RWPE1 (cell line): ENCODE measurements at regions of chr11 and their contacts with region 1.

Region 1: GRCh38 chr11:128890543-128891368 is at the start of gene KCNJ5:
- DNase-seq: peak; percentile 34
- H3K27ac ChIP-seq: peak within 1 kb of the TSS; percentile 42
- CTCF ChIP-seq: no peak

Region 2: DNA sequence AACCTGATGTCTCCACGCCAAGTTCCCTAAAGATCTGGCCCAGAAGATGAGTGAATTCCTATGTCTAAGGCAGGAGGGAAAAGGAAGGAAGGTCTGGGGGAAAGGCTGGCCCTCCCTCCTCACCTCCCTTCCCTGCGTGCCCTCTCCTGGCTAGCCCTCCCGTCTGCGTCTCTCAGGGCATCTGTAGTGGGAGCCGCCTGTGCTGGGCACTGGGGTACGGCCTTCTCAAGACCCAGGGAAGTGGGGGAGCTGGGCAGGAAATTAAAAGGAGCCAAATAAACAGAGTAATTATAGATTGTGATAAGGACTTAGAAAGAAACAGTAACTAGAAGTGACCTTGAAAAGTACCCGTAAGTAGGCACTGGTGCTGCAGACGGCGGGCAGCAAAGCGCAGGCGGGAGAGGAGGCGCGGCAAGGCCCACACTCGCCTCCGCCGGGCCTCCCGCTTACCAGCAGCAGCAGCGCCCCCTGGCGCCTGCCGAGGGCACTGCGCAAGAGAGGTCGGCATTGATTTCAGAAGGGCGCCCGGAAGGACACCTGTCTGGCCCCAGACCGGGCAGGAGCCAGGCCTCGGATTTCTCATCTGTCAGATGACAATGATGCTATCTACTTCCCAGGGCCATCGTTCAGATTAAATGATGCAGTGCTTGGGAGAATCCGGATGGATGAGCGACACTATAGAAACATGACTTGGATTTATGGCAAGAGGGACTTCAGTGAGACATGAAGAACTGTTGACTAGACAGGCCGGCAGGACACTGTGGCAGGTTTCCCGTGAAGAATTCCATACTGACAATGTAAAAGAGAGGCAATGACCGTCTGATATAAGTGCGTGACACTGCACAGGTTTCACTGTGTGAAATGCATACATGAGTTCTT is 31.0 kb before region 1 on chr11:
- CTCF ChIA-PET with region 1: no interaction called
- POLR2A ChIA-PET with region 1: no interaction called
- DNase-seq: peak; percentile 25
- H3K27ac ChIP-seq: no peak overlapping the region
- CTCF ChIP-seq: peak; percentile 84

Region 3: DNA sequence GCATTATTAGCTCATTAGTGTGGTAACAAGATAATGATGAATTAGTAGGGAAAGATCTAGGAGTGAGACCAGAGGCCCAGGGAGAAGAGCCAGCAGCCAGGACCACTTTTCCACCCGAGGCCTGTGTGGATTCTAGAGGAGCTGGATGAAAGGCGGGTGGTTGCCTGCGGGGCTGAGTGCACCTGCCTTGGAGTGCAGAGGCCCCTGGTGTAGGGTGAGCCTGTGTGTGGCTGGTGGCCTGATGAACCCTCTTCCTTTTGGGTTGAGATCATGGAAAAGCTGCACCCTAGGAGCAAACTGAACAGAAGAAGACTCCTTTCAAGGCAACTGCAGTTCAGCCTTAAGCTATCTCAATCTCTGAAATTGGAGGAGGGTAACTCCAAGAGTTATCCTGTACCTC is 57.8 kb after region 1 on chr11:
- CTCF ChIA-PET with region 1: interaction called, 11 read pairs
- POLR2A ChIA-PET with region 1: no interaction called
- DNase-seq: peak; percentile 16
- H3K27ac ChIP-seq: no peak overlapping the region
- CTCF ChIP-seq: no peak

Region 4: DNA sequence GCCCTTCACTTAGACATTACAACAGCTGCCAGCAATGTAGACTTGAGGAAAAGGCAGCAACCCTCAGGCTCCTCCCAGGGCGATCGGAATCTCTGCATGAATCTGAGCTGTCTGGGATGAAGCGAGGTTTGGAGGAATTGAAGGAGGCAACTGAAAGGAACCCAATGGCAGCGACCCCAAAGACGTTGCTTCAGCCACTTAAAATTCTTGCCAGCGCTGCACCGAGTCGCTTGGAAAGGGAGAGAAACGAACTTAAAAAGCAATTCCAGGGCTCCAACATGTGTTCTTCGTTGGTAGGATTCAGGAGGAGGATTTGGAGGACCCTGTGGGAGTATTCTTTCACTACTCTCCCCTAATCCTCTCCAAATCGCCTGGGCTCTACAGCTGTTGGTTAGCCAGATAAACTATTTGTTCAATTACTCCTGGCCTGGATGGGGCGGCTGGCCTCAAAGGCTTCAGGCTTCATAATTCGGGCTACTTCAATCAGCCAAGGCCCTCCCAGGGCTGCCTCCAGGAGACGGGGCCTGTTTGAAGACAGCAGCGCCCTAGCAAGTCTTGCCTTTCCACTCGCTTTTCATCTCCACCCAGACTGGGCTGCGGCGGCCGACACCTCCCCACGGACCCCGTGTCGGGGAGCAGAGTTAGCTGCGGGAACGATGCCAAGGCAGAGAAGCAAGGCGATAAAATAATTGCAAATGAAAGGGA is 852.5 kb after region 1 on chr11:
- CTCF ChIA-PET with region 1: no interaction called
- POLR2A ChIA-PET with region 1: no interaction called
- DNase-seq: no peak
- H3K27ac ChIP-seq: no peak overlapping the region
- CTCF ChIP-seq: no peak